ENCODE measurements at regions of chr2 and their contacts with region 1.

Region 1: GRCh38 chr2:219398721-219399333 is 11.1 kb upstream of the DNPEP start:
- DNase-seq: no peak
- H3K4me3 ChIP-seq: no peak overlapping the region
- H3K27ac ChIP-seq: peak overlapping the region; percentile 3
- H3K4me1 ChIP-seq: no peaks in the 10 kb centered on the region
- H3K27me3 ChIP-seq: no peaks in the 10 kb centered on the region
- CTCF ChIP-seq: no peak
- POLR2A ChIP-seq: no peak

Region 2: GRCh38 chr2:218482651-218483050 is 916.2 kb before region 1 on chr2:
- intact Hi-C with region 1: loop called (anchors 5 kb)
- DNase-seq: no peak
- H3K4me3 ChIP-seq: no peak overlapping the region
- H3K27ac ChIP-seq: no peak overlapping the region
- H3K4me1 ChIP-seq: no peaks in the 10 kb centered on the region
- H3K27me3 ChIP-seq: no peaks in the 10 kb centered on the region
- CTCF ChIP-seq: no peak
- POLR2A ChIP-seq: no peak

Region 3: GRCh38 chr2:219368690-219369195 is 30.1 kb before region 1 on chr2:
- intact Hi-C with region 1: no loop called
- DNase-seq: no peak
- H3K4me3 ChIP-seq: peak overlapping the region in 1 of 2 donors; percentile 14
- H3K27ac ChIP-seq: peak overlapping the region; percentile 59
- H3K4me1 ChIP-seq: peaks cover 9% of the 10 kb centered on the region
- H3K27me3 ChIP-seq: no peaks in the 10 kb centered on the region
- CTCF ChIP-seq: no peak
- POLR2A ChIP-seq: no peak

Region 4: GRCh38 chr2:219533930-219534661 is 135.3 kb after region 1 on chr2:
- intact Hi-C with region 1: loop called (anchors 2 kb)
- DNase-seq: no peak
- H3K4me3 ChIP-seq: no peak overlapping the region
- H3K27ac ChIP-seq: no peak overlapping the region
- H3K4me1 ChIP-seq: peaks cover 15% of the 10 kb centered on the region
- H3K27me3 ChIP-seq: no peaks in the 10 kb centered on the region
- CTCF ChIP-seq: no peak
- POLR2A ChIP-seq: no peak